Gastrocnemius medialis (tissue), 4 donors: ENCODE measurements at regions of chr3 and their contacts with region 1.

Region 1: DNA sequence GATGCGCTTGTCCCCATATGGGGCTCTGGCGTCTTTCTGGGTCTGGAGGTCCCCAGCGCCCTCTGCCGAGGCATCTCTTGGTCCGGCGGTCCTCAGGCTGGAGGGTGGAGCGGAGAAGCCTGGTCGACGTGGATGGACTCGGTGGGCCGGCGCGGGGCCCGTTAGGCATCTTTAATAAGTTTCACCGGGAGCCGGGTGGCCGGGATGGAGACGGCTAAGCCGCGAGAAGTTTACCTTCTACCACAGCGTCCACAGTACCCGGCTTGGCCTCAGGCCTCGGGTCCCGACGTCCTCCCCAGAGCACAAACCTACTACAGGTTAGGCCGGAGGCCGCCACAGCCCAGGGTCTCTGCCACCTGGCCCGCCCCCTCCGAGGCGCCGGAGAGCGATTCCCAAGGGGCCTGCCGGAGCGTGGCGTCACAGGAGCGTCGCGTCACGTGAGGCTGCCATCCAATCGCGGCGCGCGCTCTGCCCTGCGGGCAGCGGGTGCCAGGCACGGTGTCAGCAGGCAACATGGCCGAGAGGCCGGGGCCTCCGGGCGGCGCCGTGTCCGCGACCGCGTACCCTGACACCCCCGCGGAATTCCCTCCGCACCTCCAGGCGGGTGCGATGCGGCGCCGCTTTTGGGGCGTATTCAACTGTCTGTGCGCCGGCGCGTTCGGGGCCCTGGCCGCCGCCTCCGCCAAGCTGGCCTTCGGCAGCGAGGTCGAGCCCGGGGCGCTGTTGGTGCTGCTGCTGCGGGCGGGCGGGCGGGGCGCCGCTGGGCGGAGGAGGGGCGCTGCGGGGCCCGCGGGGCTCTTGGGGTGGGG is at the start of gene TMEM42:
- DNase-seq: peak; percentile 77 to 85
- ATAC-seq: peak; percentile 96 to 97
- H3K4me3 ChIP-seq: peak within 1 kb of the TSS; percentile 70 to 92 (median 81)
- H3K27ac ChIP-seq: peak within 1 kb of the TSS; percentile 84 to 97 (median 90)
- H3K4me1 ChIP-seq: peaks cover 11 to 17% of the 10 kb centered on the region in 2 donors
- H3K27me3 ChIP-seq: no peaks in the 10 kb centered on the region
- CTCF ChIP-seq: no peak
- POLR2A ChIP-seq: peak; percentile 84
- total RNA-seq, gene TMEM42: 7.2 to 19.7 (median 14.9) TPM

Region 2: DNA sequence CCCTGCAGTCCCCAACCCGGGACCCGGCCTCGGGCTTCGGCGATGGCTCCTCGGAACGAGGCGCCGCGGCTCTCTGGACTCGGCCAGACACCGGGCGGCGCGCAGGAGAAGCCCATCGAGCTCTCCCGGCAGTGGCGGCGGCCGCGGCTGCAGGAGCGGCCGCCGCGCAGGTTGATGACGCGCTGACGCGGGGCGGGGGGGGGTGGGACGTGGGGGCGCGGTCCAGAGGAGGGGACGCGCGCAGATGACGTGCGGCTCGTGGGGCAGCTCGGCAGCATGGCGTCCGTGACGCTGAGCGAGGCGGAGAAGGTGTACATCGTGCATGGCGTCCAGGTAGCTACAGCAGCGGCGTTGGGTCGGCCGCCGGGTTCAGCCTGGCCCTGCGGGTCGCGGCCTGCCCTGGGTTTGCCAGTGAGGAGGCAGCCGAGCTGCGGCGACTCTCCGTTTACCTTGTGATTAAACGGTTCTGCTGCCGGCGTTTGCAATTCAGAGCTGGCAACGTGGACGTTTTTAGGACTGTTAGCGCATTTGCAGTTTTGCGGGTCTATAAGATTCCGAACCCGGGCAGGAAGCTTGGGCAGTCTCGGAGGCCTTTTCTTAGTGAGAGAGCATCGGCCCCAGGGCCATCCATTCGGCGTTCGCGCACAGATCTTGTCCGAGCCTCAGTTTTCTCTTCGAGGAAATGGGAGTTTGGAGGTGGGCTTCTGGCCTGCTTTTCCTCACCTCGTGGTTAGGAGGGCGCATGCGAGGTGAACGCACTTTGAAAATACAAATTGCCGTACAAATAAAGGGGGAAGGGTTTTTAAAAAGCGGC is 114.6 kb after region 1 on chr3 and contains the starts of genes EXOSC7 and ZDHHC3:
- in situ Hi-C with region 1: no loop called
- intact Hi-C with region 1: loop called (anchors 5 kb)
- DNase-seq: peak; percentile 77 to 81
- ATAC-seq: peak; percentile 83 to 87
- H3K4me3 ChIP-seq: peak within 1 kb of the TSS; percentile 88 to 99 (median 94)
- H3K27ac ChIP-seq: peak within 1 kb of the TSS; percentile 91 to 97 (median 94)
- H3K4me1 ChIP-seq: peaks cover 38 to 43% of the 10 kb centered on the region in 2 donors
- H3K27me3 ChIP-seq: no peaks in the 10 kb centered on the region
- CTCF ChIP-seq: no peak
- POLR2A ChIP-seq: peak; percentile 62 to 75
- total RNA-seq, gene EXOSC7: 57.4 to 80.3 (median 60.9) TPM
- total RNA-seq, gene ZDHHC3: 66.2 to 90.5 (median 74.5) TPM